ENCODE measurements at regions of chr3 and their contacts with region 1.

Region 1: DNA sequence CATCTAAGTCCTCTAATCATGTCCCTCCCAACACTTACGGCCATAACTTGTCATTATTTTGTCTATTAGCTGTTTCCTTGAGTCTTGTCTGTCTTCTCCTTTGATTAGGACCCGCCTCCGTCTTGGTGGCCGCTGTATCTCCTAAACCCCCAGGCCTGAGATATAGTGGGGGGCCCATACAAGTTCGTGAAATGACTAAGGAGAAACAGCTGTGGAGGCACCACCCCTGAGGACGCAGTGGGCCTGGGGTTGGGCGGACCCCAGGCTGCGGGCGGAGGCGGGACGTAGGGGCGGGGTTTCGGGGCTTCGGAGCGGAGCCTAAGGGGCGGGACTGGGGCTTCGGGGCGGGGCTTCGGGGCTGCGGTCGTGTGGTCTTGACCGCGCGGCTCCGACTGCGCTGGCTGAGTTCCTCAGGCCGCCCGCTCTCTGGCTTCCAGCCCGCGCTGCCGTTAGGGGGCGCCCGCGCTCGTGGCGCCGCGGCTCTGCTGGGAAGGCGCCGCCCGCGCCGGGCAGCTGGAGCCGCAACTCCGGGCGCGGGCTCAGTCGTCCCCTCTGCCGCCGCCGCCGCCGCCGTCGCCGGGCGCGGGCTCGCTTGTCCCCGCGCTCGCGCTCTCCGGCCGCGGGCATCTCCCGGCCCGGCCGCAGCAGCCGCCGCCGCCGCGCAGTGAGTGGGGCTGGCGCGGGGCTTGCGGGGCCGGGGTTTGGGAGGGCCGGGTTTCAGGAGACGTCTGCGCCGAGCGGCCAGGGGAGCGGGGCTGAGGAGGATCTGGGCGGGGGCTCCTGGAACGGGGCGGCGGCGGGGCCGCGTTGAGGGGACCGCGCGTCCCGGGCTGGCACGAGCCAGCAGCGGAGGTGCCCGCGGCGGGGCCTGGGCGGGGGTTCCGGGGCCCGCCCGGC is at the start of gene KCTD6:
- DNase-seq: peak; percentile 95
- ATAC-seq: peak; percentile 87 to 96 (median 92)
- H3K4me3 ChIP-seq: peak within 1 kb of the TSS; percentile 68 to 90 (median 72)
- H3K27ac ChIP-seq: peak within 1 kb of the TSS; percentile 61 to 68 (median 64)
- H3K4me1 ChIP-seq: peaks cover 0 to 38% (median 11%) of the 10 kb centered on the region in 4 donors
- H3K27me3 ChIP-seq: no peaks in the 10 kb centered on the region
- CTCF ChIP-seq: peak; percentile 64 to 91 (median 77)
- POLR2A ChIP-seq: peak; percentile 63
- total RNA-seq, gene KCTD6: 4.3 to 9.6 (median 8.0) TPM

Region 2: DNA sequence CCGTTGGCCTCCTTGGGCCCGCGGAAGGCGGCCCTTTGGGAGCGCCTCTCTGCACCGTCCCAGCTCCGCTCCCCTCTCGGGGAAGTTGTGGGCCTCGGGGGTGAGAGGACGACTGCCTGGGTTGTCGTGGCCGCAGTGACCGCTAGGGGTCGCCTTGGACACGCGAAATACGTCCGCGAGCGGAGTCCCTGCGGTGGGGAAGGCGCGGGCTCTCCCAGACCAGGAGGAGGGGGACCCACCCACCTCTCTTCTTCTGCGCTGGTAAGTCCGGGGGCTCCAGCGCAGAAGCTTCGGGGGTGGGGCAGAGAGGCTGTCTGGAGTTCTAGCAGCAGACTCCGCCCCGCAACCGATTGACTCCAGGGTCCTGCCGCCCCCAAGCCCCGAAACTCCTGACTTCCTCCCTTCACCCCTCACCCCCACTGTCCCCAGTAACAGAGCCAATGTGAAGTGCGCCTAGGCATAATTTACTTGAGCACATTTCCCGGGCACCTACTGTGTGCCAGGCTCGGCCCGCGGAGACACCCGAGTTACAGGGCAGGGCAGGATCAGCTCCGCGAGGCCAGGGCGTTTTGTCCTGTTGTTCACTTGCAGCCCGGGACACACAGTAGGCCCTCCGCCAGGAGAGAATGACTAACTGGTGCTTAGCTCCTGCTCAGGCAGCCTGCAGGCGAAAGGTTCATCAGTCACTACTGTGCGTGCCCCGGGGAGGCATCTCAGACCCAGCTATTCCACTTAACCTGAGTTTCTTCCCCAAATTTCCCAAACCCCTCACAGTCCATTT is 313.8 kb before region 1 on chr3:
- intact Hi-C with region 1: no loop called
- DNase-seq: peak; percentile 93 to 94 (median 93)
- ATAC-seq: peak; percentile 66 to 78 (median 70)
- H3K4me3 ChIP-seq: peak overlapping the region; percentile 26 to 49 (median 32)
- H3K27ac ChIP-seq: peak overlapping the region in 1 of 3 donors; percentile 90
- H3K4me1 ChIP-seq: peaks cover 3 to 68% (median 26%) of the 10 kb centered on the region in 4 donors
- H3K27me3 ChIP-seq: no peaks in the 10 kb centered on the region
- CTCF ChIP-seq: peak; percentile 93 to 97 (median 94)
- POLR2A ChIP-seq: no peak

Region 3: DNA sequence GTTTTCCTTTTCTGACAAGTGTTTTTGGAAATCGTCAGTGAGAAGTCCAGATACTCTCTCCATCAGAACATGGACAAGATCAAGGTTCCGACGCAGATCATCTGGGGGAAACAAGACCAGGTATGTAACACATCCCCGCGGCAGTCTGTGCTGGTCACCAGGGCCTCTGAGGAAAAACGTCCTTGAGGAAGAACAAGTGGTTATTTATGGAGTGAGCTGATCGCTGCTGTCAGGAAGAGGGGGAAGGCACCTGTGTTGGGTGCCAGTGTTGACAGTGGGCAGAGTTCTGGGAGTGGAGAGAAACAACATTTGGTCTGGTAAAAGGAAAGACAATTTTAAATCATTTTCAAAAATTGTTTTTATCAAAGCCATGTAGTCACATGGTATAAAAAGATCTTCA is 206.4 kb before region 1 on chr3:
- intact Hi-C with region 1: no loop called
- DNase-seq: no peak
- ATAC-seq: no peak
- H3K4me3 ChIP-seq: no peak overlapping the region
- H3K27ac ChIP-seq: no peak overlapping the region
- H3K4me1 ChIP-seq: no peaks in the 10 kb centered on the region
- H3K27me3 ChIP-seq: no peaks in the 10 kb centered on the region
- CTCF ChIP-seq: no peak
- POLR2A ChIP-seq: no peak

Region 4: DNA sequence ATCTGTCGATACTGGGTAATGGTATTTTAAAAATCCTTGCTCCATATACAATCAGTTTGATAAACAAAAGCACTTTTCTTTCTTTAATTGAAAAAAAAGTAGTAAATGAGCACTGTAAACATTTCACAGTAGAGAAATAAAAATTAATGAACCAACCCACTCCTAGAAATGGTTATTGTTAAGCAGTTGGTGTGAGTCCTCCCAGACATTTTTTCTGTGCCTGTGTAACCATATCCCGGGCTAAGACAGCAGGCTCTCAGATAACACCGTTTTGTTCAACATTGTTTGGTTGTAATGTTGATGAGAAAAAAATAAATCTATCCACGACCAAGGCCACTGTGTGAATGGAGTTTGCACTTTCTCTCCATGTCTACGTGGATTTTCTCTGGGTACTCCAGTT is 116.5 kb before region 1 on chr3:
- intact Hi-C with region 1: no loop called
- DNase-seq: no peak
- ATAC-seq: no peak
- H3K4me3 ChIP-seq: no peak overlapping the region
- H3K27ac ChIP-seq: no peak overlapping the region
- H3K4me1 ChIP-seq: peaks cover 0 to 7% (median 0%) of the 10 kb centered on the region in 4 donors
- H3K27me3 ChIP-seq: no peaks in the 10 kb centered on the region
- CTCF ChIP-seq: no peak
- POLR2A ChIP-seq: no peak

Region 5: DNA sequence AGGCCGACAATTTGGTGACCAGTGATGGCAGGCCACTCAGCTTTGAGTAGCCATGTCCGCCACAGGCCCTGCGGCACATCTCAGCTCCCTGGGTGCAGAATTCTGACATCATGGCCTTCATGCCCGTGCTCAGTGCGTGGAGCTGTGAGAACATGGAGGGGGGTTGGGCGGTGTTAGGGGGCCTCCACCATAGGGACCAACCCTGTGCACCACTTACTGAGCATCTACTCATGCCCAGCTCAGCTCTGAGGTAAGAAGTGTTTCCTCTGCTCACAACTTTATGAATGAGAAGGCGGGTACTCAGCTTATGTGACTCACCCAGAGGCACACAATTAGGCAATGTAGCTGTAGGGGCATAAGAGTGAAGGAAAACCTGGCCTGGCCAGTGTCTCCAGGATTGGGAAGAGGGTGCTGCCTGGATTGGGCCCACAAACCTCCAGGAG is 34.8 kb after region 1 on chr3:
- intact Hi-C with region 1: loop called (anchors 5 kb)
- DNase-seq: no peak
- ATAC-seq: peak in 3 of 4 donors; percentile 7 to 56 (median 45)
- H3K4me3 ChIP-seq: no peak overlapping the region
- H3K27ac ChIP-seq: peak overlapping the region in 2 of 3 donors; percentile 30 to 95
- H3K4me1 ChIP-seq: peaks cover 0 to 96% (median 50%) of the 10 kb centered on the region in 4 donors
- H3K27me3 ChIP-seq: no peaks in the 10 kb centered on the region
- CTCF ChIP-seq: no peak
- POLR2A ChIP-seq: peak; percentile 49

Region 6: DNA sequence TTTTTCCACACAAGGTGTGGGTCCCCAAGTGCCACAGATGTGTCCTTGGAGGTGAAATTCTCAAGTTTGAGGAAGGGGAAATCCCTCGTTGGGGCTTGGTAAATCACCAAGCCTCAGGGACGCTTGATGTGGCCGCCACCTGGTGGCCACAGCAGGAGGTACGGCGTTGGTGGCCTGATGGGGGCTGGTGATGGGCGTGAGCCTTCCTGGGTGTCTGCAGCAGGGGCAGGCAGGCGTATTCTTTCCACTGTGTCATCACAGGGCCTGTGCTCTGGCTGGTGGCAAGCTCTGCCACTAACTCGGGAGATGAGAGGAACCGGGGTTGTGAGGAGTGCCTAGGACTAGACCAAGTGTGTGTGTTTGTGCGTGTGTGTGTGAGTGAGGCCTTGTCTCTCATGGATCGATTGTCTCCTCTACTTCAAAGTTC is 41.1 kb after region 1 on chr3:
- intact Hi-C with region 1: loop called (anchors 5 kb)
- DNase-seq: peak; percentile 83 to 89 (median 85)
- ATAC-seq: peak; percentile 60 to 72 (median 66)
- H3K4me3 ChIP-seq: no peak overlapping the region
- H3K27ac ChIP-seq: peak overlapping the region in 2 of 3 donors; percentile 46 to 90
- H3K4me1 ChIP-seq: peaks cover 0 to 87% (median 46%) of the 10 kb centered on the region in 4 donors
- H3K27me3 ChIP-seq: no peaks in the 10 kb centered on the region
- CTCF ChIP-seq: peak; percentile 94 to 97 (median 96)
- POLR2A ChIP-seq: no peak

Region 7: DNA sequence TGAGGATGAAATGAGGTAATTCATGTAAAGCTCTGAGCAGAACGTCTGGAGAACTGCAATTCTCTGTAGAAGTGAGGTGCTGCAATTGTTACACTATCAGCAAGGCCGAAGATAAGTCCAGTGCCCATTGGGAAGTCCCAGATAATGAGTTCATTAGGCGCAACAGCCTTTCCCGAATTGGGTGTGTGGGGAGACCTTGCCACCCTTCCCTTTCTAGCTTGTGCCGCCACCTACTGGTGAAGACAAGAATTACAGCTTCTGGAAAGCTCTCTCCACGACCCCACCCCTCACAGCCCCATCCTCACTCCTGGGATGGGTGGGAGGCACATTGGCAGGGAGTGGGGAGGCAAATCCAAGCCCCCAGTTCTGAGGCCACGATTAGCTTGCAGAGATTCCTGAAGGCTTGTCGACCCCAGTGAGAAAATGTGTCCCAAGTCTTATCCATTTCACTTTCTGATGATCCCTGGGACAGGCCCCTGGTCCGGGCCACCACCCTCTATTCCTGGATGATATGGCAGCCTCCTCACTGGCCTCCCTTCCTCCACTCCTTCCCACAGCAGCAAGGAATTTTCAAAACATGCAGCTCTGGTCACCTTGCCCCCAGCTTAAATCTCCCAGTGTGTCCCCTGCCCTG is 138.4 kb after region 1 on chr3:
- intact Hi-C with region 1: no loop called
- DNase-seq: peak in 2 of 3 donors; percentile 51 to 76
- ATAC-seq: peak; percentile 62 to 75 (median 70)
- H3K4me3 ChIP-seq: no peak overlapping the region
- H3K27ac ChIP-seq: no peak overlapping the region
- H3K4me1 ChIP-seq: peaks cover 0 to 32% (median 14%) of the 10 kb centered on the region in 4 donors
- H3K27me3 ChIP-seq: no peaks in the 10 kb centered on the region
- CTCF ChIP-seq: peak; percentile 87 to 96 (median 92)
- POLR2A ChIP-seq: no peak